ENCODE measurements at regions of chr17 and their contacts with region 1.

Region 1: DNA sequence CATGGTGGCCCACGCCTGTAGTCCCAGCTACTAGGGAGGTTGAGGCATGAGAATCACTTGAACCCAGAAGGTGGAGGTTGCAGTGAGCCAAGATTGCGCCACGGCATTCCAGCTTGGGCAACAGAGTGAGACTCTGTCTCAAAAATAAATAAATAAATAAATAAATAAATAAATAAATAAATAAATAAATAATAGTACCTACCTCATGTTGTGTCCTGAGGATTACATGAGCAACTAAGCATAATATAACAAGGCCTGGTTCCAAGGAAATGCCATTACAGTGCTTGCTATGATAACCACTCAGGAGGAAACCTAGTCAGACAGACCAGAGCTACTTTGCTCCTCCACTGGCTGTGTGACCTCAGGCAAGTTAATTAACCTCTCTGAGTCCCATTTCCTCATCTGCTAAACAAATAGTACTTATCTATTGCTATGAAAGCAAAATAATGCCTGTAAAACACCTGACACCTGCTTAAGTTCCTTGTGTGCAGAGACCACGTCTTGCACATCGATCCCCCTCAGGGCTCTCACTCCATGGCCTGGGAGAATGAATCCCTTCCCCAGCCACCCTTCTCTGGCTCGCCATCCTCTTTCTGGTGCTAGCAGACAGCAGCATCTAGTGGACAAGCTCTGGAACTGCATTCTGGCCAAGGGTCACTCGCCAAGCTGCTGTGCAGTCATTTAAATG is 7.5 kb downstream of the EPOP start:
- DNase-seq: peak in 1 of 2 donors; percentile 55
- H3K4me3 ChIP-seq: no peak overlapping the region
- H3K27ac ChIP-seq: no peak overlapping the region
- H3K4me1 ChIP-seq: no peaks in the 10 kb centered on the region
- H3K27me3 ChIP-seq: peaks cover 3 to 63% of the 10 kb centered on the region in 2 donors
- CTCF ChIP-seq: peak; percentile 97 to 99

Region 2: DNA sequence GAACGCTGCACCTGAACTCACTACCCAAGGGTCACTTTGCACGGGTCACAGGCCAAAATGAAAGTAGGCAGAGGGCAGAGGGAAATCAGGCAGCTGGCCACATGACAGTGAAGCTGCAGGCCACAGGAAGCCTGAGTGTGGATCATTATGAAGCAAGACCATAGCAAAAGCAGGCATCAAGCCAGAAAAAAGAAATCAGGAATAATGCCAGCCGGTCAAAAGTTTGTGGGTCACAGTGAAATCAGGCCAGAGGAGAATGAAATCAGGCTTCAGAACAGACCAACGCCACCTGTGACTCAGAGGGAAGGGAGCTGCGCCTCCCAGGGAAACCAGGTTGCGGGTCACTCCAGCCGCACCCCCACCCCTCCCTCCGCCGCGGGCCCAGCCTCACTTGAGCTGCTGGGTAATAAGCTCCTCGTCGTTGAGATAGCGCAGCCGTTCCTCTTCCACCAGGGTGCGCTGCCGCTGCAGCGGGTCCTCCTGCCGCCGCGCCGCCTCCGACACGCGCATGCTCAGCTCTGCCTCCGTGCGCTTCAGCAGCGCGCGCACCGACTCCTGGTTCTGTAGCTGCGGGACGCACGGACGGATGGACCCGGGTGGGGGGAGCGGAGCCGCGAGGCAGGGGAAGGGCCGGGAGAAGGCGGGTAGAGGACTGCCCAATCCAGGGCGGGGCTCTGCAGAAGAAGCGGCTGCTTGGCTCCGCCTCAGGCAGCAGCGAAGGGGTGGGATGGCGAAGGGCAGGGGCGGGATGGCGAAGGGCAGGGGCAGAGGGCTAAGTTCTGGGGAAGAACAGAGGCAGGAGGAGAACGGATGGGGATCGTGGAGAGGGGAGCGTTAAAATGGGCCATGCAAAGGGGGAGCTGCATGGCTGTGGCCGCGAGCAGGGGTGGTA is 109.2 kb before region 1 on chr17:
- intact Hi-C with region 1: loop called (anchors 5 kb)
- DNase-seq: peak; percentile 86 to 92
- H3K4me3 ChIP-seq: peak overlapping the region; percentile 38 to 52
- H3K27ac ChIP-seq: no peak overlapping the region
- H3K4me1 ChIP-seq: peaks cover 0 to 36% (median 26%) of the 10 kb centered on the region in 4 donors
- H3K27me3 ChIP-seq: peaks cover 5 to 84% of the 10 kb centered on the region in 2 donors
- CTCF ChIP-seq: peak; percentile 86 to 92

Measured in tibial artery (tissue), 4 donors.